ENCODE measurements at regions of chr1 and their contacts with region 1.

Region 1: DNA sequence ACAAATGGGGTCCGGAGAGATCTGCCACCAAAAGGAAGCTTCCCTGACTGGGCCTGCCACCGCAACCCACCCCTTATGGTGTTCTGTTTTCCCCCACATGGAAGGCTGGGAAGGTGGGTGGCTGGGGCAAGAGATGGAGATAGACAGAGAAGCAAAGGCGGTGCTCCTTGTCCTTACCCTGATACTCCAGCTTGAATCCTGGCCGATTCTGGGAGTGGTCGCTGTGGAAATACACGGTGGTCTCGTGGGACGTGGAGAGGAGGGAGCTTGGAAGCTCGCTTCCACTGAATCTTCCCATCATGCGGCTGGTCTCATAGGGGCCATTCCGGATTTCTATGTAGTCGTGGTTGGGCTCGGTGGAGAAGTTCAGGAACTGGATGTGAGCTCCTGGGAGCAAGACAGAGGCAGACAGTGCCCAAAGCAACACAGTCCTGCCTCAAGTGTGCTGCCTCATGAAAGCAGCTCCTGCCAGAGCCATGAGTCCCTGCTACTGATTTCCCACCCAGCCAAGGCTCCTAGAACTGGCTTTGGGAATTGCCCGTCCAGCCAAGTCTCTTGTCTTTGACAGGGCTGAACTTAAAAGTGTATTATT is 138.5 kb downstream of the ZSCAN20 start:
- DNase-seq: no peak
- H3K4me3 Mint-ChIP-seq: no peak overlapping the region
- H3K27ac Mint-ChIP-seq: no peak overlapping the region
- H3K4me1 Mint-ChIP-seq: no peaks in the 10 kb centered on the region
- H3K27me3 Mint-ChIP-seq: peaks cover 28% of the 10 kb centered on the region
- CTCF ChIP-seq: no peak

Region 2: DNA sequence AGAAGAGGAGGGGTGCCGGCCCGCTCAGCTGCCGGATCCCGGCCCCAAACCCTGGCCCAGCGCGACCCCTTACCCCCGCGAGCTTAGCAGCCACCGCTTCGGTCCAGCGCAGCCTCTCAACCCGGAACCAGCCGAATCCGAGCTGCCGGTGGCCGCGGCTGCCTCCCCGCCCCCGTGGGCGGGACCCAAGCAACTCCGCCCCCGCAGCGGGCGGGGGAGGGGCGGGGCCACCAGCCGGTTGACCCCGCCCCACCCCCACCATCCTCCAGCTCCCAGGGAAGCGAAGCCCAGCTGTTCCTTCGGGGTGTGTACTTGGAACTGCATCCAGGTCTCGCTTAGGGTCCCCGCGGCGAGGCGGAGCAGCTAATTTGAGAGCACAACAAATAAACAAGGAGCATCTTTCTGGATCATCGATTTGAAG is 429.0 kb before region 1 on chr1 and contains the start of gene TRIM62:
- CTCF ChIA-PET with region 1: no interaction called
- POLR2A ChIA-PET with region 1: no interaction called
- intact Hi-C with region 1: no loop called
- DNase-seq: peak; percentile 85
- H3K4me3 Mint-ChIP-seq: peak within 1 kb of the TSS; percentile 77
- H3K27ac Mint-ChIP-seq: no peak within 1 kb of the TSS
- H3K4me1 Mint-ChIP-seq: peaks cover 8% of the 10 kb centered on the region
- H3K27me3 Mint-ChIP-seq: no peaks in the 10 kb centered on the region
- CTCF ChIP-seq: no peak
- total RNA-seq, gene TRIM62: 2.4 and 2.8 TPM in 2 replicates

Region 3: GRCh38 chr1:33219881-33220661 is 390.9 kb before region 1 on chr1:
- CTCF ChIA-PET with region 1: interaction called, 3 read pairs
- POLR2A ChIA-PET with region 1: no interaction called
- intact Hi-C with region 1: loop called (anchors 5 kb)
- DNase-seq: peak; percentile 84
- H3K4me3 Mint-ChIP-seq: no peak overlapping the region
- H3K27ac Mint-ChIP-seq: peak overlapping the region; percentile 95
- H3K4me1 Mint-ChIP-seq: peaks cover 40% of the 10 kb centered on the region
- H3K27me3 Mint-ChIP-seq: no peaks in the 10 kb centered on the region
- CTCF ChIP-seq: no peak

Region 4: DNA sequence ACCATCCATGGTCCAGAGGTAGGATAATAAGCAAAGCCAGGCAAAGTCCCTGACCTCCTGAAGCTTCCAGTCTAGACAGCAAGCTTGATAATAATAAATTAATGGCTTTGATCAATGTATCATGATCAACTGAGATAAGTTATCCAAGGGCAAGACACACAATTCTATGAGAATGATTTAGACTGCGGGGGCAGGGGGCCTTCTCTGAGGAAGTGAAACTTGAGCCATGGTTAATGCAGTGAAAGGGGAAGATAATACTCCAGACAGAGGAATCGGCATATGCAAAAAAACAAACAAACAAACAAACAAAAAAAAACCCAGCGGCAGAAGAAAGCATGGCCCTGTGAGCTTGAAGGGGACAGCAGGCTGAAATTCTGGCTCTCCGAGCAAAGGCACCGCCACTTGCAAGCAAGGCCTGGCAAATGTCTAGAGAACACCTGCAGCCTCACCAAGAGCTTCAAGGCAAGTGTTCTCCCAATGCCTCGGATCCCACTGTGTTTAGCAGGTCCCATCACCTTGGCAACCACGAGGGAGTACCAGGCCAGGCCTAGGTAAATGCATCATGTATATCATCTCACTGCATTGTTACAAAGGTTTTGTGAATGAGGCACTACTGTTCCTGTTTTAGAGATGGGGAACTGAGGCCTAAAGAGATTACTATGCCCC is 529.2 kb after region 1 on chr1:
- CTCF ChIA-PET with region 1: no interaction called
- POLR2A ChIA-PET with region 1: no interaction called
- intact Hi-C with region 1: no loop called
- DNase-seq: no peak
- H3K4me3 Mint-ChIP-seq: no peak overlapping the region
- H3K27ac Mint-ChIP-seq: no peak overlapping the region
- H3K4me1 Mint-ChIP-seq: no peaks in the 10 kb centered on the region
- H3K27me3 Mint-ChIP-seq: no peaks in the 10 kb centered on the region
- CTCF ChIP-seq: no peak

Measured in MCF 10A (cell line).